ENCODE measurements at regions of chr3 and their contacts with region 1.

Region 1: DNA sequence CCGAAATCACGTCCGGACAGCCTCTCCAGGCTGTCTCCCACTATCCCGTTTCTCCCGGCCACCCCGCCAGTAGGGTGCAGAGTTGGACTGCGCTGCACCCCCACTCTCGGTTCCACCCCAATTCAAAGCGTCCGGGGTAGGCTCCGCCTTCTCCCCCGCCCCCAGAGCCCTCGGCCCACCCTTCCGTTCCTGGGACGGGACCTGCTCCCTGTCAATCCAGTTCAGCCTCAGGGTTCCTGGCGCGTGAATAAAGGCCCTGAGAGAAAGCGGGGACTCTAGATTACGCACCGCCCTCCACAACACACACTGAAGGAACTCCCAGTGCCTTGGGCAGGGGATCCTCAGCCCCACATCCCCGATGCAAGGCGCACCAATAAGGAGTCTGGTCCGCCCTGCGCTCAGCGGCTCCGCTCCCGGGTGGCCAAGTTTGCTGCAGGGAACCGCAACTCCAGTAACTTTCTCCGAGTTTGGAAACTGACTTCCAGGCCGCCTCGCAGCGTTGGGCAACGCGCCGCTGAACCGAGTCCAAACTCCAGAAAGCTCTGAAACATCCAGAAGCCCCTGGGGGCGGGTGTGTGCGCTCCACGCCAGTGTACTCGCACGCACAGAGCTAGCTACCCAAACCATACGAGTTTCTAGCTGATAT is 1.9 kb downstream of the ADAMTS9 start:
- DNase-seq: peak; percentile 88
- ATAC-seq: peak; percentile 83
- H3K4me3 ChIP-seq: peak overlapping the region; percentile 64
- H3K27ac ChIP-seq: peak overlapping the region; percentile 89
- H3K4me1 ChIP-seq: peaks cover 3% of the 10 kb centered on the region; the same call in 1 of the 2 replicates
- H3K27me3 ChIP-seq: no peaks in the 10 kb centered on the region
- CTCF ChIP-seq: peak; percentile 35
- POLR2A ChIP-seq: peak; percentile 29
- RAD21 ChIP-seq: no peak

Region 2: GRCh38 chr3:64548200-64548889 is 137.6 kb before region 1 on chr3:
- CTCF ChIA-PET with region 1: no interaction called
- POLR2A ChIA-PET with region 1: no interaction called
- dilution Hi-C with region 1: no loop called
- in situ Hi-C with region 1: no loop called
- intact Hi-C with region 1: loop called (anchors 1 kb)
- DNase-seq: peak; percentile 73
- ATAC-seq: peak; percentile 91
- H3K4me3 ChIP-seq: no peak overlapping the region
- H3K27ac ChIP-seq: peak overlapping the region; percentile 99; the same call in 1 of the 2 replicates
- H3K4me1 ChIP-seq: peaks cover 12% of the 10 kb centered on the region; the same call in 1 of the 2 replicates
- H3K27me3 ChIP-seq: no peaks in the 10 kb centered on the region
- CTCF ChIP-seq: no peak
- POLR2A ChIP-seq: no peak
- RAD21 ChIP-seq: no peak

Region 3: DNA sequence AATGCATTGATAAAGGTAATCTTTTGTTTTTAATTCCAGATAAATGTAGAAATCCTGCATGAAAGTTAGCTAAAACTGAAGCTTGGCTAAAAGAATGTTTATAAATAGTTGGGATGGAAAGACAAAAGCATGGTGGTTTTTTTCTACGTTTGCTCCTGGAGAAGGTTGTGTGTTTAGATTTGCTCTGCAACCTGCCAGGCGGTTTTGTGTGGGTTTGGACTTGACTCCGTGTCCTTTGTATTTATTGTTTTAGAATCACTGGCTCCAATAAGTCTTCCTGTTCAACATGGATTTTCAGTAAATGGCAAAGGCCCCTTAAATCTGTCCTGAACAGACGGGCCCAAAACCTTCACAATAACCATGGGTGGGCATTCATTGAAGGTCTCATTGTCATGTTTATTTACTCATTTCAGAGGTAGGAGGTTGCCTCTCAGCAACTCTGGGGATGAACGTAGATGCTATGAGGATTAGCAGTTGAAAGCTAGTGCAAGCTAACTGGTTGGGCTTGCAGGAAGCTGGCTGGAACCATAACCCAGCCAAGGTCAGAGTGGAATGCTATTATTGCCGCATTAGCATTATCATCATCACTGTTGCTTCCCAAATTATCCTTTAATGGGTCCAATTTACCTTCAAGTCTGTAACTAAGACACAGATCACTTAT is 62.5 kb after region 1 on chr3:
- CTCF ChIA-PET with region 1: no interaction called
- POLR2A ChIA-PET with region 1: no interaction called
- dilution Hi-C with region 1: no loop called
- in situ Hi-C with region 1: no loop called
- intact Hi-C with region 1: no loop called
- DNase-seq: no peak
- ATAC-seq: no peak
- H3K4me3 ChIP-seq: no peak overlapping the region
- H3K27ac ChIP-seq: no peak overlapping the region
- H3K4me1 ChIP-seq: no peaks in the 10 kb centered on the region
- H3K27me3 ChIP-seq: no peaks in the 10 kb centered on the region
- CTCF ChIP-seq: no peak
- POLR2A ChIP-seq: no peak
- RAD21 ChIP-seq: no peak

Region 4: DNA sequence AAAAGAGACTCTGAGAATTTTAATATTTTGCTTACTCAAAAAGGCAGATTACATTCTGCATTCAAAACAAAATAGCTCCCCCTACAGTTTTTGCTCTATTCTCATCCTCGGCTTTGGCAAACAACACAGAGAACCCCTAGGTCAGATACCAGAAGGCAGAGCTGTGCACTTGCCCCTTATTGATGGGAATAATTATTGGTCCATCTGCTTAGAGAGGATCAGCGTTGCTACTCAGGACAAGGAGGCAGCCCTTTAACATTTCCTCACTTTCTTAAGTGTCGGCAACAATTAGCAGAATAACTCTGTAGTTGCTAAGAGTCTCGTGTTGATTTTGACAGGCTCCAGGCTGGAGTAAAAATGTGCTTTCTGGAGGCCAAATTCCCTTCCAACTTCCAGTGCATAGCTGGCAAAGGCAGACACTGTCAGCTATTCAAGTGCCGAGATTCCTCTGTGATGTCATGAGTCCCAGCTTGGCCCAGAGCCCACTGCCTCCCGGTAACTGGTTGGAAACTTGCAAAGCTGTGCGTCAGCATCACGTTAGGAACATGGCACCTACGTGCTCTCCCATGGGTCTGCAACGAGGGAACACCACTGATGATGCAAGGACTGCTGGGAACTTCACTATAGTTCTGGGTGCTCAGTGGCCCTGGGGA is 484.6 kb after region 1 on chr3:
- CTCF ChIA-PET with region 1: no interaction called
- POLR2A ChIA-PET with region 1: no interaction called
- dilution Hi-C with region 1: no loop called
- in situ Hi-C with region 1: no loop called
- intact Hi-C with region 1: loop called (anchors 5 kb)
- DNase-seq: peak; percentile 85
- ATAC-seq: peak; percentile 64
- H3K4me3 ChIP-seq: no peak overlapping the region
- H3K27ac ChIP-seq: no peak overlapping the region
- H3K4me1 ChIP-seq: no peaks in the 10 kb centered on the region
- H3K27me3 ChIP-seq: no peaks in the 10 kb centered on the region; the same call in 1 of the 2 replicates
- CTCF ChIP-seq: peak; percentile 26; the same call in 1 of the 2 replicates
- POLR2A ChIP-seq: no peak
- RAD21 ChIP-seq: 0 out of 2 replicates have a peak, but pooled peaks have one; percentile 12